ENCODE measurements at regions of chr1 and their contacts with region 1.

Region 1: DNA sequence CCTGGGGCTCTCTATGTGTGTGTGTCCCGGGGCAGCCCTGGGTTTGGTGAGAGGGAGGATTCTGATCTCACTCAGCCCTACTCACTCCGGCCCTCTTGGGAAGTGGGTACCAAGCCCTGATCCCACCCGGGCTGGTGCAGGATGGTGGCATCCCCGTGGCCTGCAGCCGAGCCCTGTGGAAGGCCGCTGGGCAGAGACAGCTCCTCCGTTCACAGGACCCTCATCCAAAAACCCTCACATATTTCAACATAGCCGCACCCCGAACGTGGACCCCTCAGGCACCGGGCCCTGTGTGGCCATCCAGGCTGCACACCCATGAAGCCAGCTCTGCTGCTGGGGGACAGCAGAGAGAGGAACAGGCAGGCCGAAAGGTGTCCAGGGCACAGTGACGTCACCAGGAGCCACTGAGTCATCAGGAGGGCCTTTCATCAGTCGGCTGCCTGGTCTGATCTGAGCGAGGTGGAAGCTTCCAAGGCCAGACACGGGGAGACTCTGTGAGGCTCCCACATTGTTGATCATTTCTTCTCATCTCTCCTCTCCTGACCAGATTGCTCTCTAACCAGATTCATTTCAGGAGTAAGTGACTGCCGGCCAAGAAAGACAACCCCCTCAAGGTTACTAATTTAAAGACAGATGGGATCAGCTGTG is 16.2 kb upstream of the GPR157 start:
- DNase-seq: peak; percentile 71
- ATAC-seq: peak; percentile 87
- H3K4me3 ChIP-seq: no peak overlapping the region
- H3K27ac ChIP-seq: no peak overlapping the region
- H3K4me1 ChIP-seq: peaks cover 10 to 27% of the 10 kb centered on the region in 2 experiments; a peak in 3 of 4 replicates
- H3K27me3 ChIP-seq: no peaks in the 10 kb centered on the region
- CTCF ChIP-seq: no peak
- POLR2A ChIP-seq: no peak
- RAD21 ChIP-seq: no peak

Region 2: DNA sequence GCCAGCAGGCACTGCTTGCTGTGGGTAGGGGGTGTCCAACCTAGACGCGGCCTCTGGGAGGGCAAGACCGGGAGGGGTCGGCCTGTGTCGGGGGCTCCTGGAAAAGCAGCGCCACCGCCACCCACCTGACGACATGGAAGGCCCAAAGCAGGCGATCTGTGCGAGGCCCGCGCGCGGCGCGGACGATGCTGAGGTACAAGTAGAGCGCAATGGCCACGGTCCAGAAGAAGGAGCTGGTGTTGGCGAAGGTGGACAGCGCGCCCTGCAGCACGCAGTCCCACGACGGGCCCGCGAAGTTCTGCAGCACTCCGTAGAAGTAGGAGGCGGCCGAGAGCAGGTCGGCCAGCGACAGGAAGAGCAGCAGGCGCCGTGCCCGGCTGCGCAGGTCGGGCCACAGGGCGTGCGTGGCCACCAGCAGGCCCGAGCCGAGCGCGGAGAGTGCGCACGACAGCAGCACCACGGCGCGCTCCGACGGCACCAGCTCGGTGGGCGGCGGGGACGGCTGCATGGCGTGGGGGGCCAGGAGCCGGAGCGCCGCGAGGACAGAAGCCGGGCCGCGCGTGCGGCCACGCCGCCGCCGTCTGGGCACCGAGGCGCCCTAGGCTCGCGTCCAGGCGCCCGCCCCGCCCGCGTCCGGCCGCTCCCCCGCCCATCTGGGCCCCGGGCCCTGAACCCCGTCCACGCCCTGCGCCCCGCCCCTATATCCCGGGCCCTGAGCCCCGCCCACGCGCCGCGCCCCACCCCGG is 16.5 kb before region 1 on chr1 and contains the start of gene GPR157:
- CTCF ChIA-PET with region 1: interaction called, 20 read pairs
- POLR2A ChIA-PET with region 1: interaction called, 3 read pairs
- RAD21 ChIA-PET with region 1: no interaction called
- intact Hi-C with region 1: no loop called
- DNase-seq: peak; percentile 70
- ATAC-seq: peak; percentile 87
- H3K4me3 ChIP-seq: peak within 1 kb of the TSS; percentile 74 to 92
- H3K27ac ChIP-seq: peak within 1 kb of the TSS; percentile 74
- H3K4me1 ChIP-seq: peaks cover 12 to 33% of the 10 kb centered on the region in 2 experiments
- H3K27me3 ChIP-seq: no peaks in the 10 kb centered on the region
- CTCF ChIP-seq: no peak
- POLR2A ChIP-seq: peak; percentile 74
- RAD21 ChIP-seq: no peak
- total RNA-seq, gene GPR157: 7.7 TPM

Region 3: GRCh38 chr1:9196129-9197040 is 51.2 kb after region 1 on chr1:
- CTCF ChIA-PET with region 1: interaction called, 9 read pairs
- POLR2A ChIA-PET with region 1: no interaction called
- RAD21 ChIA-PET with region 1: interaction called in 1 of 2 experiments, 5 read pairs
- intact Hi-C with region 1: loop called (anchors 1 kb)
- DNase-seq: no peak
- ATAC-seq: peak; percentile 83
- H3K4me3 ChIP-seq: no peak overlapping the region
- H3K27ac ChIP-seq: no peak overlapping the region
- H3K4me1 ChIP-seq: peaks cover 2 to 18% of the 10 kb centered on the region in 2 experiments; a peak in 2 of 4 replicates
- H3K27me3 ChIP-seq: peaks cover 19% of the 10 kb centered on the region; the same call in 1 of the 2 replicates
- CTCF ChIP-seq: peak; percentile 78 to 95 (median 84)
- POLR2A ChIP-seq: no peak
- RAD21 ChIP-seq: peak; percentile 98

Measured in HCT116 (cell line).